CD8-positive, alpha-beta T cell (primary cell): ENCODE measurements at regions of chr20 and their contacts with region 1.

Region 1: GRCh38 chr20:1266167-1266973 is at the start of gene SNPH:
- DNase-seq: peak; percentile 51 to 89 (median 79)
- ATAC-seq: peak; percentile 85
- H3K4me3 ChIP-seq: peak within 1 kb of the TSS; percentile 51 to 56
- H3K4me3 Mint-ChIP-seq: peak within 1 kb of the TSS; percentile 86
- H3K27ac ChIP-seq: peak within 1 kb of the TSS; percentile 43 to 80
- H3K27ac Mint-ChIP-seq: peak within 1 kb of the TSS; percentile 95
- H3K4me1 ChIP-seq: peaks cover 52% of the 10 kb centered on the region
- H3K4me1 Mint-ChIP-seq: peaks cover 75% of the 10 kb centered on the region
- H3K27me3 ChIP-seq: no peaks in the 10 kb centered on the region
- H3K27me3 Mint-ChIP-seq: no peaks in the 10 kb centered on the region
- CTCF ChIP-seq: no peak
- total RNA-seq, gene SNPH: 13.6 to 14.4 TPM

Region 2: DNA sequence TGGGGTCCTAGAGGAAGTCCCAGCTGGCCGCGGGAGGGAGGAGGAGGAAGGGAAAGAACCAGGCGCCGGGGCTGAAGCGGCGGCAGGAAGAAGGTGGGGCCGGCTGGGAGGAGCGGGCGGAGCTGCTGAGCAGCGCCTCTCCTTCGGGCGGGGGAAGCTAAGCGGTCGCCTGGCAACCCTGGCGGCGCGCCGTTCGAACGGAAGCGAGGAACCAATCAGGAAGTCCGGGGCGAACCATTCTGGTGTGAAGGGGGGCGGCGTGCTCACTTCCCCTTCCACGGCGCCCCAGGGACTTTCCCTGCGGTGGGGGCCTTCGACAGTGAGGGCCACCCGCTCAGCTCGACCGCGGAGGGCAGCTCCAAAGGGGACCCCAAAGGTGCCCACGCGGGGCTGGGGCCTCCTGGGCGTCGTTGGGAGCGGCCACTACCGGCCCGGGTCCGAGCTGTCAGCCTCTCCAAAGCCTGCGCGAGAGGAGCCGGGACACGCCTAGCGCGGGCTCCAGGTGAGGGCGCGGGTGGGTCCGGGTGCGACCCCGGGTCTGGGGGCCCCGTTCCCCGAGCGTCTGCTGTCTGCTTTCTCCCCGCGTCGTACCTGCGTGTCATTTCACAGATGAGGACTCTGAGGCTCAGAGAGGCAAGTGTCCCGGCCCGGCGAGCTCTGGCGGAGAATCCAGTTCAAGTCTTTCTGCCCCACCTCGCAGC is 432.8 kb before region 1 on chr20 and contains the start of gene FAM110A:
- CTCF ChIA-PET with region 1: no interaction called
- POLR2A ChIA-PET with region 1: no interaction called
- intact Hi-C with region 1: loop called in 1 of 2 experiments (anchors 5 kb)
- DNase-seq: peak; percentile 89 to 99 (median 96)
- ATAC-seq: peak; percentile 96
- H3K4me3 ChIP-seq: peak within 1 kb of the TSS; percentile 90 to 96
- H3K4me3 Mint-ChIP-seq: peak within 1 kb of the TSS; percentile 91
- H3K27ac ChIP-seq: peak within 1 kb of the TSS; percentile 85 to 96
- H3K27ac Mint-ChIP-seq: peak within 1 kb of the TSS; percentile 82
- H3K4me1 ChIP-seq: peaks cover 27% of the 10 kb centered on the region
- H3K4me1 Mint-ChIP-seq: peaks cover 43% of the 10 kb centered on the region
- H3K27me3 ChIP-seq: no peaks in the 10 kb centered on the region
- H3K27me3 Mint-ChIP-seq: no peaks in the 10 kb centered on the region
- CTCF ChIP-seq: no peak
- total RNA-seq, gene FAM110A: 6.7 to 7.7 TPM

Region 3: DNA sequence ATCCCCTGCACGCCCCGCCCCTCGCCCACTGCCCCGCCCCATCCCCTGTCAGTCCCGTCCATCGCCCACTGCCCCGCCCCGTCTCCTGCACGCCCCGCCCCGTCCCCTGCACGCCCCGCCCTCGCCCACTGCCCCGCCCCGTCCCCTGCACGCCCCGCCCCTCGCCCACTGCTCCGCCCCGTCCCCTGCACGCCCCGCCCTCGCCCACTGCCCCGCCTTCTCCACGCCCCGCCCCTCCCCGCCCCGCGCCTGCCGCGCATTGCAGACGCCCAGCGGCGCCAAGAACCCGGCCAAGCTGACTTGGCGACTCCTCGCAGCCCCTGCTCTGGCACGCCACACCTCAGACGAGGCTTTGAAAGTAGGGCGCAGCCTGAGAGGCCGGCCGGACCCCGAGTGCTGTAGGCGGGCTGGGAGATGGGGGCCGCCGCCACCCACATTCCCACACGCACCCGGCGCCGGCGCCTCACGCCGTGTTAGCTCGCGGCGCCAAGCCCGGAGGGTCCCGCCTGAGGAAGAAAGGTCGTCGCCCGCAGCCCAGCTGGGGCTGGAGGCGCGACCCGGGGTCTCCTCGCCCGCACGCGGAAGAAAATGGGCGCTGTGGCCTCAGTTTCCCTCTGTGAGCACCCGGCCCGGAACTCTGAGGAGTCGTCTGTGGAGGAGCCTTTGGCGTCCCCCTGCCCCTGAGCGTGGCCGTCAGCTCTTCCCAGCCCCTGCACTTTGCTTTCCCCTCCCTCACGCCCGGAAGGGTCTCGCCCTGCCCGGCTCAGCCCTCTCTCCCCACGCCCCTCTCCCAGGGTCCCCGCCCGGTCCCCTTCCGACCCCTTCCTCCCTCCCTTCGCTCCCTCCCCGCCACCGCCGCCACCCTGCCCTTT is 40.4 kb before region 1 on chr20 and contains the start of gene RAD21L1:
- CTCF ChIA-PET with region 1: no interaction called
- POLR2A ChIA-PET with region 1: interaction called, 5 read pairs
- intact Hi-C with region 1: loop called (anchors 1 to 2 kb)
- DNase-seq: peak; percentile 63 to 85 (median 80)
- ATAC-seq: peak; percentile 93
- H3K4me3 ChIP-seq: peak within 1 kb of the TSS; percentile 64 to 82
- H3K4me3 Mint-ChIP-seq: peak within 1 kb of the TSS; percentile 87
- H3K27ac ChIP-seq: peak within 1 kb of the TSS in 1 of 2 experiments; percentile 44
- H3K27ac Mint-ChIP-seq: no peak within 1 kb of the TSS
- H3K4me1 ChIP-seq: peaks cover 9% of the 10 kb centered on the region
- H3K4me1 Mint-ChIP-seq: peaks cover 18% of the 10 kb centered on the region
- H3K27me3 ChIP-seq: peaks cover 0 to 8% of the 10 kb centered on the region in 2 experiments
- H3K27me3 Mint-ChIP-seq: peaks cover 13% of the 10 kb centered on the region
- CTCF ChIP-seq: no peak
- total RNA-seq, gene RAD21L1: not detected

Region 4: DNA sequence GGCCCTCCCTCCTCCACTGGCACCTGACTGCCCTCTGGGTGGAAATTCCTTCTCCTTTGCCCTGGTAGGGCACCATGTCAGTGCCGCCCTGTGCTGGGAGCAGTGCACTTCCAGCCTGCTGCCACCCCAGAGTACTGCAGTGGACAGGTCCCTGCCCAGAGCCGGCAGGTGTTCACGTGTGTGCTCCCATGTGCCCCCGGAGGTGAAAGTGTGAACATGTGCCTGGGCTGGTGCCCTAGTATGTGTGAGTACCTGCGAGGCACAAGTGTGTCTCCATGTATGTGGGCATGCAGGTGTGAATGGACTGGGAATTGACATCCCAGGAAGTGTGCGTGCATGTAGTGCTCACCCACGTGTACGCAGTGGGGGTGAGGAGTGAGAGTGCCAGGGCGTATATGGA is 33.2 kb after region 1 on chr20:
- CTCF ChIA-PET with region 1: no interaction called
- POLR2A ChIA-PET with region 1: no interaction called
- intact Hi-C with region 1: loop called in 1 of 2 experiments (anchors 1 kb)
- DNase-seq: peak in 7 of 9 experiments; percentile 16 to 56 (median 42)
- ATAC-seq: peak; percentile 53
- H3K4me3 ChIP-seq: no peak overlapping the region
- H3K4me3 Mint-ChIP-seq: peak overlapping the region; percentile 57
- H3K27ac ChIP-seq: no peak overlapping the region
- H3K27ac Mint-ChIP-seq: peak overlapping the region; percentile 60
- H3K4me1 ChIP-seq: peaks cover 29% of the 10 kb centered on the region
- H3K4me1 Mint-ChIP-seq: peaks cover 29% of the 10 kb centered on the region
- H3K27me3 ChIP-seq: no peaks in the 10 kb centered on the region
- H3K27me3 Mint-ChIP-seq: no peaks in the 10 kb centered on the region
- CTCF ChIP-seq: peak; percentile 41

Region 5: DNA sequence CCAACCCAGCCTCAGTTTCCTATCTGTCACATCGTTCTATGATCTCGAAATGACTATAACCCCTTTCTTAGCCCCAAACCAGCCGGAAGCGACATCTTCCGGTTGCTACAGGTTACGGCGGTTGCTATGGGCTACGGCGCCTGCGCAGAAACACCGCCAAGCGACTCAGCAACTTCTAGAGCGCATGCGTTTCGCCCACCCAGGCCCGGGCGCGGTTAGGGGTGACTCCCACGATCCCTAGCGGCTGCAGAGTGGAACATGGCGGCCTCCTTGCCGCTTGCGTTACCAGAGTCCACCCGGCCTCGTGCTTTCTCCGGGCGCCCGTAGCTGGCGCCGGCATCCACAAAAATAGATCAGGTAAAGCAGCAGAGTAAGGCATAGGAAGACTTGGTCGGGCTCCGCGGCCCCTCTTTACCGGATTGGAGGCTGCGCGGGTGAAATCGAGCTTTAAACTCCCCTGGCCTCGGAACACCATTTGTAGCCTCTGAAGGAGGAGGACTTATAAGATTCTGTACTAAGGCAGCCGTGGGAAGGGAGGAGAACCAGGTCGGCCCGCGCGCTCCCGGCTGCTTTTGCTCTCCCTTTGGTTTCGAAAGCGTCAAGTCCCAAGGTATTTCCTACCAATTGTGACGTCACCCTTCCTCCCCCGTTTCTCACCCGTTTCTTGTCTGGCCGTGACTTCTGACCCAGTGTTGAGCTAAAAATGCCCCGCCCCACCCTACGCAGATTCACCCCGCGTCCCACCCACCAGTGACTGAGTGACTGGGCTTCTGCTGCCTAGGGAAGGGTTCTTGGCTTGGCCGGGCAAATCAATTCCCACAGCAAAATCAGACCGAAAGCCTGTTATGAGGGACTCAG is 59.0 kb after region 1 on chr20:
- CTCF ChIA-PET with region 1: no interaction called
- POLR2A ChIA-PET with region 1: no interaction called
- intact Hi-C with region 1: loop called in 1 of 2 experiments (anchors 1 kb)
- DNase-seq: peak; percentile 98 to 100 (median 99)
- ATAC-seq: peak; percentile 86
- H3K4me3 ChIP-seq: peak overlapping the region; percentile 81 to 97
- H3K4me3 Mint-ChIP-seq: no peak overlapping the region
- H3K27ac ChIP-seq: peak overlapping the region; percentile 94 to 99
- H3K27ac Mint-ChIP-seq: no peak overlapping the region
- H3K4me1 ChIP-seq: peaks cover 38% of the 10 kb centered on the region
- H3K4me1 Mint-ChIP-seq: peaks cover 20% of the 10 kb centered on the region
- H3K27me3 ChIP-seq: no peaks in the 10 kb centered on the region
- H3K27me3 Mint-ChIP-seq: no peaks in the 10 kb centered on the region
- CTCF ChIP-seq: no peak